CD8-positive, alpha-beta T cell (primary cell): ENCODE measurements at regions of chr7 and their contacts with region 1.

Region 1: GRCh38 chr7:152463709-152464311 is 28.0 kb upstream of the KMT2C start:
- DNase-seq: peak; percentile 100
- ATAC-seq: peak; percentile 92
- H3K4me3 ChIP-seq: peak overlapping the region; percentile 90 to 91
- H3K4me3 Mint-ChIP-seq: peak overlapping the region; percentile 89
- H3K27ac ChIP-seq: peak overlapping the region; percentile 83 to 92
- H3K27ac Mint-ChIP-seq: peak overlapping the region; percentile 32
- H3K4me1 ChIP-seq: peaks cover 12% of the 10 kb centered on the region
- H3K4me1 Mint-ChIP-seq: peaks cover 11% of the 10 kb centered on the region
- H3K27me3 ChIP-seq: no peaks in the 10 kb centered on the region
- H3K27me3 Mint-ChIP-seq: no peaks in the 10 kb centered on the region
- CTCF ChIP-seq: no peak

Region 2: GRCh38 chr7:151088856-151089699 is 1374.7 kb before region 1 on chr7:
- CTCF ChIA-PET with region 1: no interaction called
- POLR2A ChIA-PET with region 1: no interaction called
- intact Hi-C with region 1: no loop called
- DNase-seq: peak in 1 of 9 experiments; percentile 61
- ATAC-seq: no peak
- H3K4me3 ChIP-seq: no peak overlapping the region
- H3K4me3 Mint-ChIP-seq: peak overlapping the region; percentile 48
- H3K27ac ChIP-seq: no peak overlapping the region
- H3K27ac Mint-ChIP-seq: no peak overlapping the region
- H3K4me1 ChIP-seq: peaks cover 32% of the 10 kb centered on the region
- H3K4me1 Mint-ChIP-seq: peaks cover 28% of the 10 kb centered on the region
- H3K27me3 ChIP-seq: no peaks in the 10 kb centered on the region
- H3K27me3 Mint-ChIP-seq: peaks cover 24% of the 10 kb centered on the region
- CTCF ChIP-seq: no peak

Region 3: GRCh38 chr7:152176797-152177196 is 287.0 kb before region 1 on chr7:
- CTCF ChIA-PET with region 1: no interaction called
- POLR2A ChIA-PET with region 1: no interaction called
- intact Hi-C with region 1: no loop called
- DNase-seq: no peak
- ATAC-seq: no peak
- H3K4me3 ChIP-seq: no peak overlapping the region
- H3K4me3 Mint-ChIP-seq: no peak overlapping the region
- H3K27ac ChIP-seq: no peak overlapping the region
- H3K27ac Mint-ChIP-seq: no peak overlapping the region
- H3K4me1 ChIP-seq: no peaks in the 10 kb centered on the region
- H3K4me1 Mint-ChIP-seq: no peaks in the 10 kb centered on the region
- H3K27me3 ChIP-seq: no peaks in the 10 kb centered on the region
- H3K27me3 Mint-ChIP-seq: no peaks in the 10 kb centered on the region
- CTCF ChIP-seq: no peak

Region 4: GRCh38 chr7:152424348-152425108 is 39.3 kb before region 1 on chr7:
- CTCF ChIA-PET with region 1: interaction called, 3 read pairs
- POLR2A ChIA-PET with region 1: no interaction called
- intact Hi-C with region 1: loop called in 1 of 2 experiments (anchors 5 kb)
- DNase-seq: no peak
- ATAC-seq: no peak
- H3K4me3 ChIP-seq: no peak overlapping the region
- H3K4me3 Mint-ChIP-seq: no peak overlapping the region
- H3K27ac ChIP-seq: no peak overlapping the region
- H3K27ac Mint-ChIP-seq: no peak overlapping the region
- H3K4me1 ChIP-seq: peaks cover 33% of the 10 kb centered on the region
- H3K4me1 Mint-ChIP-seq: peaks cover 69% of the 10 kb centered on the region
- H3K27me3 ChIP-seq: no peaks in the 10 kb centered on the region
- H3K27me3 Mint-ChIP-seq: no peaks in the 10 kb centered on the region
- CTCF ChIP-seq: no peak

Region 5: GRCh38 chr7:152436111-152436930 is 27.5 kb before region 1 on chr7:
- CTCF ChIA-PET with region 1: no interaction called
- POLR2A ChIA-PET with region 1: interaction called, 32 read pairs
- intact Hi-C with region 1: loop called (anchors 1 kb)
- DNase-seq: peak; percentile 84 to 95 (median 90)
- ATAC-seq: peak; percentile 73
- H3K4me3 ChIP-seq: peak overlapping the region; percentile 59 to 79
- H3K4me3 Mint-ChIP-seq: peak overlapping the region; percentile 88
- H3K27ac ChIP-seq: peak overlapping the region; percentile 86 to 93
- H3K27ac Mint-ChIP-seq: peak overlapping the region; percentile 96
- H3K4me1 ChIP-seq: peaks cover 16% of the 10 kb centered on the region
- H3K4me1 Mint-ChIP-seq: peaks cover 31% of the 10 kb centered on the region
- H3K27me3 ChIP-seq: no peaks in the 10 kb centered on the region
- H3K27me3 Mint-ChIP-seq: no peaks in the 10 kb centered on the region
- CTCF ChIP-seq: no peak

Region 6: DNA sequence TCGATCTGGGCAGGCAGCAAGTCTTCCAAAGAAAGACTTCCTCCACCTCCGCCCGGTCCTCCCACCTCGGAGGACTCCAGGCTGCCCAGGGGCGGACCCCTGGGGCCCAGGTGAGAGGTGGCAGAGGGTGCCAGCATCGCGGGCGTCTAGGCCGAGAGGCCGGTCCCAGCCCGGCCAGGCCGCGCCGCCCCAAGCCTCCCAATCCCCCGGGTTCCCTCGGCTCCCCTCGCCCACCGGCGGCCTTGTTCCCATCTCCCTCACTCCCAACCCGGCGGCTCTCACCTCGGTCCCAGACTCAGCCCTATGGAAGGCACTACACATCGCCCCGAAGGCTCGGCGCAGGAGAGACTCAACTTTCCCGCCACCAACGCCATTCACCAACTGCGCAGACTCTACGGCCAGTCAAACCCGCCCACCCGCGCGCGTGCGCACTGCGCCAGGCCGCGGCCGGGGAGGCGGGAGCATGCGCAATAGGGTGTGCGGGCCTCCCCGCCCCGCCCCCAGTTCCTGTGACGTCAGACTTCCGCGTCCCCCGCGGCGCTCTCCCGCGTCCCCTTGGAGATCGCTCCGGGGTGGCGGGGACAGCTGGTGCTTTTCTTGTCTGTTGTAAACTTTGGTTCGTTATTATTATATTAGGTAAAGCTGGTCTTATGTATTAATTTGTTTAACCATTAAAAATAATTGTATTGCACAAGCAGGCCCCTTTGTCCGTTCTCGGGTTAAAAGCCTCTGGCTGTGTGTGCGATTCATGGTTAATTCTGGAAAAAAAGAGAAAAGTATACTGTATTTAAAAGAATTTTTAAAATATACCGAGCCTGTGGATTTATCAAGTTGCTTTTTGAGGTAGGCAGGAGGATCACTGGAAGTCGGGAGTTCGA is 212.2 kb after region 1 on chr7 and contains the start of gene XRCC2:
- CTCF ChIA-PET with region 1: no interaction called
- POLR2A ChIA-PET with region 1: no interaction called
- intact Hi-C with region 1: loop called (anchors 1 kb)
- DNase-seq: peak; percentile 88 to 99 (median 96)
- ATAC-seq: peak; percentile 94
- H3K4me3 ChIP-seq: peak within 1 kb of the TSS; percentile 65 to 89
- H3K4me3 Mint-ChIP-seq: peak within 1 kb of the TSS; percentile 96
- H3K27ac ChIP-seq: peak within 1 kb of the TSS; percentile 79 to 87
- H3K27ac Mint-ChIP-seq: peak within 1 kb of the TSS; percentile 83
- H3K4me1 ChIP-seq: peaks cover 8% of the 10 kb centered on the region
- H3K4me1 Mint-ChIP-seq: peaks cover 11% of the 10 kb centered on the region
- H3K27me3 ChIP-seq: no peaks in the 10 kb centered on the region
- H3K27me3 Mint-ChIP-seq: no peaks in the 10 kb centered on the region
- CTCF ChIP-seq: no peak
- total RNA-seq, gene XRCC2: 0.17 to 0.30 TPM

Region 7: DNA sequence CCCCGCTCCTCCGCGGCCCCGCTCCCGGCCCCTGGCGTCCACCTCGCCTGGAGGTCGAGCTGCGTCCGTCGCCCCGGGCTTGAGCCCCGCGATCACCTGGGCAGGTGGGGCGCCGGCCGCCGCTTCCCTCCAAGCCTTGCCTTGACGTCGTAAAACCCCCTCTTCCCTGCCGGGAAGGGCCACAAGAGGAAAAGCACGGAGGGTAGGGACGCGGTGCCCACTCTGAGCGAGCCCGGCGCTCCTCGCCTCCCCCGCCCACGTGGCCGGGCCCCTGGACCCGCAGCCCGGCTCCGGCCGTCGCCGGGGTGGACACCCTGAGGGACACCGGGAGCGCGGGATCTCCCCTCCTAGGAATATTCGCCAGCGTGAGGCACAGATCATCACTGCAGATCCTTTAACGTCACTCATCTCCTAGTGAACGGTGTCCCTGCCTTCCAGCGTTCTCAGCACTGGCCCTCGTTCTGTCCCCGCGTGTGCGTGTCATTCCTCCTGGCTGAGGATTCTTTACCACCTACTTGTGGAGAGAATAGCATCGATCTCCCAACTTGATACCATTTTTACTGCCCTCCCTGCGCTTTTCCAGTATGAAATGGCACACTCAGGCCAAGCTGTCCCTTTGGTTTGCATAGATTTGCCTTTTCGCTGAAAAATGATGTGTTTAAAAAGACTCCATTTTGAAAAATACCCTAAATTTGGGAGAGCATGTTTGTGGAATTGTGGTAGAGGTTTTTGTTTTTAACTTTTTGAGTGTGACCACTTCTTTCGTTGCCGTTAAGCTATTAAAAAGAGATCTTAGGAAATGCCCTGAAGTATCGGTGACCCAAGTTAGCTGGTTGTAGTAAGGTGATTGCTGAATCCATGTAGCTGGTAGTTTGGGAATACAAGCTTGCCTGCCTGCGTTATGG is 296.4 kb after region 1 on chr7:
- CTCF ChIA-PET with region 1: no interaction called
- POLR2A ChIA-PET with region 1: no interaction called
- intact Hi-C with region 1: loop called in 1 of 2 experiments (anchors 5 kb)
- DNase-seq: peak in 7 of 9 experiments; percentile 4 to 52 (median 22)
- ATAC-seq: peak; percentile 26
- H3K4me3 ChIP-seq: peak overlapping the region; percentile 58 to 79
- H3K4me3 Mint-ChIP-seq: peak overlapping the region; percentile 94
- H3K27ac ChIP-seq: peak overlapping the region; percentile 58 to 88
- H3K27ac Mint-ChIP-seq: peak overlapping the region; percentile 92
- H3K4me1 ChIP-seq: peaks cover 20% of the 10 kb centered on the region
- H3K4me1 Mint-ChIP-seq: peaks cover 28% of the 10 kb centered on the region
- H3K27me3 ChIP-seq: no peaks in the 10 kb centered on the region
- H3K27me3 Mint-ChIP-seq: no peaks in the 10 kb centered on the region
- CTCF ChIP-seq: no peak